ENCODE measurements at regions of chr14 and their contacts with region 1.

Region 1: DNA sequence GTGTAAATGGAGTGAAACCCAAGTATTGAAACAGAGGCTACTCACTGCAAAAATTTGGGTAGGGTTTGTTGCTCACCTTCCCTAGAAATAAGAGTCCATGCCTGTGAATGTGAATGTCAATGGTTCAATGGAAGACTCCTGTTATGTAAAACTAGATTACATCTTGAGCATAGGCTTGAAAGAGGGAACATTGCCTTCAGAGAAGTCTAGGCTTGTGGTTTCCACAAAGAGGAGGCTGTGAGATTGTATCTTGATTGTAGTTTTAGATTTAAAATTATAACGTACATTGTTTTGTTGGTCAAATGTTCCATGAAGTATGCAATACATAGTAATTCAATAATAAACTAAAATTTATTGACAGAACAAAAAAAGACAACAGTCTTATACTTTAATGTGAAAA is 413.7 kb upstream of the RPL10L start:
- DNase-seq: no peak
- H3K4me3 ChIP-seq: no peak overlapping the region
- H3K27ac ChIP-seq: no peak overlapping the region
- H3K4me1 ChIP-seq: no peaks in the 10 kb centered on the region
- H3K27me3 ChIP-seq: no peaks in the 10 kb centered on the region
- CTCF ChIP-seq: no peak
- POLR2A ChIP-seq: no peak

Region 2: DNA sequence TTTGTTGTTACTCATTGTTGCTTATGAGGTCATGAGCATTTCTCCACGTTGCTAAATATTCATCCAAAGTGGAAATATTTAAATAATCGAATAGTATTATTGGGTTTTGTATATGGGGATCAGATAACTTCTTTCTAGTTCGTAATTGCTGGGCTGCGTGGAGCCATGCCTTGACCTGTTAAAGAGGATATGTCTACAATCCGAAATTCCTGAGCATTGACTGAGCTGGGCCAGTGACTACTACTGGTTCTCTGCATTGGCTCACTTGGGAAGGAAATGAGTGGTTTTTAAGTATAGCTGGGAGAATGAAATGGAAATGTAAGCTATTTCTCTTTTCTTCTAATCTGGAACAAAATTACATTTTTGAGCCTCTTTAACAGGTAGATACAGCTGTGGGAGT is 577.0 kb before region 1 on chr14:
- intact Hi-C with region 1: loop called (anchors 10 kb)
- DNase-seq: no peak
- H3K4me3 ChIP-seq: no peak overlapping the region
- H3K27ac ChIP-seq: no peak overlapping the region
- H3K4me1 ChIP-seq: no peaks in the 10 kb centered on the region
- H3K27me3 ChIP-seq: no peaks in the 10 kb centered on the region
- CTCF ChIP-seq: no peak
- POLR2A ChIP-seq: no peak